ENCODE measurements at regions of chr16 and their contacts with region 1.

Region 1: DNA sequence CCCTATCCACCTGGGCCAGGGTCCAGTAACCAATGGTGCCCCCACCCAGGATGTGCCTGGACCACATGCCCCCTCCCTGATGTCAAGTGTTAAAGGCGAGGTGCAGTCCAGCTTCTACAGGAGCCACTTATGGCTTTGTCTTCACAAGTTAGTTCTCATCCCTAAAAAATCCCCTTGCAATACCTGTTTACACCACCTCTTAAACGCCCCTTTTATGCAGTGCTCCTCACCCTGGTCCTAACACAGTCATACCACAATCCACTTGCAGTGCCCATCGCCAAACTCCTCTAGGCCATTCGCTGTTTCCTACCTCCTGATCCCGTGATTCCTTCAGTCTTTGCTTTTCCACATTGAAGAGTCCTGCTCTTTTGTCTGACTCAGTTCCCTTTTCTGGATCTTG is 7.1 kb downstream of the GLYR1 start:
- DNase-seq: no peak
- H3K4me3 ChIP-seq: no peak overlapping the region
- H3K27ac ChIP-seq: no peak overlapping the region
- H3K4me1 ChIP-seq: no peaks in the 10 kb centered on the region
- H3K27me3 ChIP-seq: no peaks in the 10 kb centered on the region
- CTCF ChIP-seq: no peak

Region 2: DNA sequence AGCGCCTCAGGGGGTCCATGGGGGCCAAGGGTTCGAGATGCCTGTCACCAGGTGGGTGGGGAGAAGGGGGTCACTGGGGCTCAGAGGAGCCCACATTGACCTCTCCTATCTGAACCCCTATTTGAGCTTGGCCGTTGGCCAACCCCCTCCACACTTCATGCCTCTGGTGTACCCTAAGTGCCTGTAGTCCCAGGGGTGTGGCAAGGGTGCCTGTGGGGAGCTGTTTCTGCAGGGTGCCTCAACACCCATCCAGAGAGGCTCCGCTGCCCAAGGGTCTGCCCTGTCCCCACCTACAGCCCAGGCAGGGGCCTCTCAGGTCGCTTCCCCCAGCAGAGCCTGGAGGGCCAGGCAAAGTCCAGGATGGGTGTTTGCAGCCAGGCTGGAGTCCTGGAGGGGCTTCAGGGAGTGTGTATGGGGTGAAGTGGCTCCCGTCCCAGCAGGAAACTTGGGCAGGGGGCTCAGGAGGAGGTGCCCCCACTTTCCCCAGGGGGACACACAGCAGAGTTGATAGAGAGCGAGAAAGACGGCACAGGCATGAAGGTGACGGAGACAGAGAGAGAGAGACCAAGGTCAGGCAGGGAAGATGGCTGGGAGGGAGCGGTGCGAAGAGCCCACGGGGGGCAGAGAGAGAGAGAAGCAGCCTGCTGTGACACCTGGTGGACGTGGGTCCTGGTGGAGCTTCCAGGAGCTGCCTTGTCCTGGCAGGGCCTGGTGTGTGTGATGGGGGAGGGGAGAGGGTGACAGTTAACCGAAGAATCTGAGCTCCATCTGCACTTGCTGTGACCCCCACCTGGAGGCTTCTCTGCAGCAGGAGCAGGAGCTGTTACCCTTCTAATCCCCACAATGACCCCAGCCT is 52.1 kb before region 1 on chr16 and contains the start of gene SEPTIN12:
- CTCF ChIA-PET with region 1: no interaction called
- POLR2A ChIA-PET with region 1: no interaction called
- intact Hi-C with region 1: no loop called
- DNase-seq: no peak
- H3K4me3 ChIP-seq: no peak within 1 kb of the TSS
- H3K27ac ChIP-seq: no peak within 1 kb of the TSS
- H3K4me1 ChIP-seq: peaks cover 32% of the 10 kb centered on the region
- H3K27me3 ChIP-seq: no peaks in the 10 kb centered on the region
- CTCF ChIP-seq: no peak
- total RNA-seq, gene SEPTIN12: not detected in 2 replicates

Region 3: DNA sequence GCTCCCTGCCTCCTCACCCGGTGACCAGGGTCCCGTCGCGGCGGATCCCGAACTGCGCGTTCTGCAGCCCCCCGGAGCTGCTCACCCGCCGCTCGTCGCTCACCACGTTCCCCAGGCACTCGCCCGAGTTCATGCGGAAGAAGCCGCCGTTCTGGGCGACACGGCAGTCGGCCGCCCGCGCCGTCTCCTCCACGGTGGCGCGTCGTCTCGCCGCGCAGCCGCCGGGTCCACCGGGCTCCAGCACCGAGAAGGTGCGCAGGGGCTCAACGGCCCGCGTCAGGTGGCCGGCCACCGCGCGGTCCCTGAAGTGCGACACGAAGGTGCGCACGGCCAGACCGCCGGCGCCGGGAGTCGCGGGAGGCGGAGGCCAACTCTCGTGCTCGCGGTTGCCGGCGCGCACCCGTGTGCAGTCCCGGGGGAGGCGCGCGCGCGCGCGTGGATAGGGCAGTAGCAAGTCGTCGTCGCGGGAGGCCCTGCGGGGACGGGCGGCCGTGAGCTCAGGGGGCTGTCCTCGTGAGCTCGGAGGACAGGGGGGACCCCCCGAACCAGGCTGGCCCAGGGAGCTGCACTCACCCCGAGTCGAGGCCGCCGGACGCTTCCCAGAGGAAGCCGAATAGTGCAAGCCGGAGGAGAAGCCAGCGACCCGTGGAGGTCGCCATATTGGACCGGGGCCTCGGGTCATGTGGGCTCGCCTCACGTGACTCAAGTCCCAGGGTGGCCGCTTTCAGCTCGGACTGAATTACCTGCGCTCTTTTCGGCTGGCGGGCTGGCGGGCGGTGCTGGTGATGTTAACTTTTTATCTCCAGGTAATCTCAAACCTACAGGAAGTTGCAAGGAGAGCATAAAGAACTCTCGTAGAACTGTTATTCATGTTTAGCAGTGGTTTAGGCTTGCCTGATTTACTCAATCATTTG is 193.6 kb after region 1 on chr16 and contains the start of gene NAGPA:
- CTCF ChIA-PET with region 1: no interaction called
- POLR2A ChIA-PET with region 1: interaction called, 13 read pairs
- intact Hi-C with region 1: no loop called
- DNase-seq: peak; percentile 63 to 85
- H3K4me3 ChIP-seq: peak within 1 kb of the TSS; percentile 59
- H3K27ac ChIP-seq: no peak within 1 kb of the TSS
- H3K4me1 ChIP-seq: peaks cover 12% of the 10 kb centered on the region
- H3K27me3 ChIP-seq: no peaks in the 10 kb centered on the region
- CTCF ChIP-seq: no peak
- total RNA-seq, gene NAGPA: 20.6 and 31.2 TPM in 2 replicates

Region 4: GRCh38 chr16:5450409-5451104 is 610.6 kb after region 1 on chr16:
- CTCF ChIA-PET with region 1: no interaction called
- POLR2A ChIA-PET with region 1: no interaction called
- intact Hi-C with region 1: no loop called
- DNase-seq: no peak
- H3K4me3 ChIP-seq: no peak overlapping the region
- H3K27ac ChIP-seq: no peak overlapping the region
- H3K4me1 ChIP-seq: no peaks in the 10 kb centered on the region
- H3K27me3 ChIP-seq: peaks cover 25% of the 10 kb centered on the region
- CTCF ChIP-seq: no peak